Posterior vena cava (tissue), 2 donors: ENCODE measurements at regions of chr11 and their contacts with region 1.

Region 1: GRCh38 chr11:65588199-65589054 is 7.2 kb downstream of the KCNK7 start:
- DNase-seq: peak; percentile 89

Region 2: GRCh38 chr11:65540297-65541092 is 47.9 kb before region 1 on chr11:
- intact Hi-C with region 1: loop called in 1 of 2 experiments (anchors 5 kb)
- DNase-seq: peak; percentile 97